HepG2 (cell line): ENCODE measurements at regions of chr6 and their contacts with region 1.

Region 1: DNA sequence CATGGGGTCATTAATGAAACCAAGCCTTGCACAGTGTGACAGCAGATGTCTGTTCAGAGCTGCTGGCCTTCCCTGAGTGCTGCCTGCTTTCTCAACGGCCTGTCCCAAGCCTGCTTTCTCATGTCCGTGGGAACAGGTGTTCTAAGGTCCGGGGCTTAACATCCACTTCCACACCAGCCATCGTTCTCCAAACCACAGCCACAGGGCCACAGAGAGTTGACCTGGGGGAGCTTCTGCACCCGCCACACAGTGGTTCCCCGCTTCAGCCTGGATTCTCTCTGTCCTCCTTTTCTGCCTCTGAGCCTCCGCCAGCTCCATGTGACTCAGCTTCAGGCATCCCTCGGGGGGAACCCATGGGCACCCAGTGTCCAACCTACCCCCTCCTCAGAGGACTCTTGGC is 26.9 kb upstream of the PPP1R3G start:
- DNase-seq: no peak
- ATAC-seq: no peak
- H3K4me3 ChIP-seq: no peak overlapping the region
- H3K27ac ChIP-seq: peak overlapping the region; percentile 87
- H3K4me1 ChIP-seq: peaks cover 59% of the 10 kb centered on the region
- H3K27me3 ChIP-seq: no peaks in the 10 kb centered on the region
- CTCF ChIP-seq: no peak
- EP300 ChIP-seq: no peak
- POLR2A ChIP-seq: no peak
- RAD21 ChIP-seq: no peak

Region 2: DNA sequence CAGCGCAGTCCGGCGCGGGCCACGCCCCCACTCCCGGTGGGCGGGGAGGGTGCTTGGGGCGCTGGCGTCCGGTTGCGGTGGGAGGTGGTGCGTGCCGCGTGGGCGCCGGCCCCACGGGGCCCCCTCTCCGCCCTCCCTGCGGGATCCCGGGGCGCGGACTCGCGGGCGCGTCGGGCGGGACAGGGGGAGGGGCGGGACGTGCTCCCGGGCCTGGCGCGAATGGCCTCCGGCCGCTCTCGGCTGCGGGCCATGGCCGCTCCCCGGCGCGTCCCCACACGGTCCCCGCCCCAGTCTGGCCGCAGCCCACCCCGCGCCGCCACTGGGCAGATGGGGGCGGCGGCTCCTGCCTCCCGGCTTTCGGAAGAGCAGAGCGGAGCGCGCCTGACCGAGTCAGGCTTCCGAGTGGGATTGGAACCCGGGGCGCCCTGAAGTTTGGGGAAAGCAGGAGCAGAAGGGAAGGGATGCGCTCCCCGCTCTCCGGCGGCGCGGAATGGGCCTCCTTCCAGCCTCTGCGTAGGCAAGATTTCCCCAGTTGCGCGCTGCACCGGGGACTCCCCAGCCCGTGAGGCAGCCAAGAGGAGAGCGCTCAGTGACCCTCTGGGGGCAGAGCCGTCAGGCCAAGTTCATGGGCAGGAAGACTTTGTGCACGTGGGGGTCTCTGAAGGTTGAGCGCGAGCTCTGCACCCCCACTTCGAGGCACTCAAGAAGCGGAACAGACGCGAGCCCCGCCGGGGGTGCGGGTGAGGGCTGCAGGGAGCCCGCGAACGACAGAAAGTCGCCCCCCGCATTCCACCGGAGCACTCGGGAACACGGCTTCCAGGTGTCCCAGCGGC is 26.3 kb after region 1 on chr6:
- CTCF ChIA-PET with region 1: no interaction called
- POLR2A ChIA-PET with region 1: interaction called, 21 read pairs
- in situ Hi-C with region 1: no loop called
- intact Hi-C with region 1: no loop called
- DNase-seq: no peak
- ATAC-seq: peak; percentile 22
- H3K4me3 ChIP-seq: peak overlapping the region; percentile 49 to 71 (median 51); a peak in 5 of 6 replicates
- H3K27ac ChIP-seq: peak overlapping the region; percentile 81
- H3K4me1 ChIP-seq: peaks cover 73% of the 10 kb centered on the region
- H3K27me3 ChIP-seq: no peaks in the 10 kb centered on the region
- CTCF ChIP-seq: no peak
- EP300 ChIP-seq: peak in 1 of 2 experiments; percentile 4; a peak in 1 of 4 replicates
- POLR2A ChIP-seq: peak; percentile 31 to 35; a peak in 2 of 4 replicates
- RAD21 ChIP-seq: peak; percentile 73

Region 3: DNA sequence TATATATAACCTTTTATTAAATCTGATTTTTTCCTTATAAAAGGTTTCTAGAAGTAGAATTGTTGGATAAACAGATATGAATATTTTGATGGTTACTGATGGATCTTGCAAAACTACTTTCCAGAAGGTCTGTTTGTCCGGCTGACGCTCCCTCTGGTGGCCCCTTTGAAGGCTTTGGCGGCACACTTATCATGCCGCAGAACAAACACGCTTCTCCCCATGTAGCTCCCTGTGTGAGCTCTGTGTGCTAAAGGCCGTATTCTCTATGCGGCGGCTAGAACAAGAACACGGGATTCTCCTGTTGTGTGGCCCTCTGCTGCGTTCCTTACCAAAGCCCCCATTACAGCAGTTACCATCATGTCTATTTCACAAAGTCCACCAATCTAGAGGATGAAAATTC is 56.9 kb after region 1 on chr6:
- CTCF ChIA-PET with region 1: interaction called, 56 read pairs
- POLR2A ChIA-PET with region 1: interaction called, 6 read pairs
- in situ Hi-C with region 1: loop called (anchors 5 kb)
- intact Hi-C with region 1: loop called (anchors 1 kb)
- DNase-seq: peak; percentile 91
- ATAC-seq: peak; percentile 94
- H3K4me3 ChIP-seq: no peak overlapping the region
- H3K27ac ChIP-seq: peak overlapping the region; percentile 10
- H3K4me1 ChIP-seq: peaks cover 39% of the 10 kb centered on the region
- H3K27me3 ChIP-seq: no peaks in the 10 kb centered on the region
- CTCF ChIP-seq: peak; percentile 88
- EP300 ChIP-seq: peak in 1 of 2 experiments; percentile 75; a peak in 2 of 4 replicates
- POLR2A ChIP-seq: no peak
- RAD21 ChIP-seq: peak; percentile 88

Region 4: GRCh38 chr6:5205877-5206850 is 147.9 kb after region 1 on chr6:
- CTCF ChIA-PET with region 1: no interaction called
- POLR2A ChIA-PET with region 1: interaction called, 4 read pairs
- in situ Hi-C with region 1: no loop called
- intact Hi-C with region 1: loop called (anchors 5 kb)
- DNase-seq: peak; percentile 95
- ATAC-seq: peak; percentile 96
- H3K4me3 ChIP-seq: peak overlapping the region in 1 of 3 experiments; percentile 21; a peak in 1 of 6 replicates
- H3K27ac ChIP-seq: peak overlapping the region; percentile 53
- H3K4me1 ChIP-seq: peaks cover 50% of the 10 kb centered on the region
- H3K27me3 ChIP-seq: no peaks in the 10 kb centered on the region
- CTCF ChIP-seq: no peak; the same call in 1 of the 2 replicates
- EP300 ChIP-seq: peak in 1 of 2 experiments; percentile 76; a peak in 2 of 4 replicates
- POLR2A ChIP-seq: no peak
- RAD21 ChIP-seq: no peak

Region 5: GRCh38 chr6:5260661-5261544 is 202.6 kb after region 1 on chr6 and contains the starts of genes FARS2 and LYRM4:
- CTCF ChIA-PET with region 1: no interaction called
- POLR2A ChIA-PET with region 1: interaction called, 11 read pairs
- in situ Hi-C with region 1: no loop called
- intact Hi-C with region 1: no loop called
- DNase-seq: peak; percentile 79
- ATAC-seq: peak; percentile 88
- H3K4me3 ChIP-seq: peak within 1 kb of the TSS; percentile 85 to 99 (median 86)
- H3K27ac ChIP-seq: peak within 1 kb of the TSS; percentile 98
- H3K4me1 ChIP-seq: peaks cover 47% of the 10 kb centered on the region
- H3K27me3 ChIP-seq: peaks cover 0 to 2% of the 10 kb centered on the region in 2 experiments; a peak in 1 of 5 replicates
- CTCF ChIP-seq: peak; percentile 39
- EP300 ChIP-seq: no peak
- POLR2A ChIP-seq: peak; percentile 63 to 76
- RAD21 ChIP-seq: peak; percentile 31; the same call in 1 of the 2 replicates
- total RNA-seq, gene FARS2: 26.0 and 28.0 TPM in 2 replicates
- total RNA-seq, gene LYRM4: 64.6 and 80.2 TPM in 2 replicates

Region 6: DNA sequence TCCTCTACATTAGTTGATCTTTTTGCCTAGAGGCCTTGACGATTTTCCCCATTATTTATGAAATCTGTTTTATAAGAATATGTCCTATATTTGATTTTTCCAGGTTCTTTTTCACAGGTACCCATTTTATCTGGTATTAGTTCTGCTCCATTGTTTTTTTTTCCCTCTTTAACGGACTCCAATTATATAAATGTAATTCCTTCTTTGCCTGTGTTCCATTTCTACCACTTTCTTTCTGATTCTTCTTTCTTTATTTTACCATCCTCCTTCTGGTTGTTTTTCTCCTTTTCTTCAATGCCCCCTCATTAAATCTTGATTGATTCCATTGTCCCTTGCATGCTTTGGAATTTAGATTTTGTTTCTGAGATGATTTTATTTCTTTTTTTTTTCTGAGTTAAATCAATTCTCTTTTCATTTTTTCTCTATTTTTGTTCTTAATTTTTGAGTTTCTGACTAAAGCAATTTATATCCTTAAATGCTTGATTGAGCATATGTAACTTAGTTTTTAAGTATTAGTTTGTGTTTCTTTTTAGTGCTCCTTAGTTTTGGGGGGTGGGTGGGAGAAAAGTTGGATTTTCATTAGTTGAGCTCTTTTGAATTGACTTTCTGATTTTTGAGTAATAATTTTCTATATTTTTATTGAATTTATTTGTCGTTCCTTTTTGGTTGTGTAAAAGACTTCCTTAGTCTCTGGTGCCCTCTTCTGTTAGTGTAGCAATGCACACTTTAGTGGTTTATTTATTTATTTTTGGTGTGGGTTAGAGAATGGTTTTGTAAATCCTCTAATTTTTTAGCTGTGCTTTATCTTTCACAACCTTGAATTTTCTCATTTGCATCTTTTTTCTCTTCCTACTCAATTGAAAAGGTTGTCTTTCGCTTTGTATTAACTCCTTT is 343.8 kb after region 1 on chr6:
- CTCF ChIA-PET with region 1: interaction called, 5 read pairs
- POLR2A ChIA-PET with region 1: no interaction called
- in situ Hi-C with region 1: no loop called
- intact Hi-C with region 1: loop called (anchors 1 kb)
- DNase-seq: peak; percentile 19
- ATAC-seq: no peak
- H3K4me3 ChIP-seq: no peak overlapping the region
- H3K27ac ChIP-seq: no peak overlapping the region
- H3K4me1 ChIP-seq: no peaks in the 10 kb centered on the region
- H3K27me3 ChIP-seq: no peaks in the 10 kb centered on the region
- CTCF ChIP-seq: peak; percentile 41; the same call in 1 of the 2 replicates
- EP300 ChIP-seq: no peak
- POLR2A ChIP-seq: no peak
- RAD21 ChIP-seq: no peak